Activated CD8-positive, alpha-beta T cell treated with anti-CD3 and anti-CD28 coated beads for 36 hours (primary cell): ENCODE measurements at regions of chr6 and their contacts with region 1.

Region 1: DNA sequence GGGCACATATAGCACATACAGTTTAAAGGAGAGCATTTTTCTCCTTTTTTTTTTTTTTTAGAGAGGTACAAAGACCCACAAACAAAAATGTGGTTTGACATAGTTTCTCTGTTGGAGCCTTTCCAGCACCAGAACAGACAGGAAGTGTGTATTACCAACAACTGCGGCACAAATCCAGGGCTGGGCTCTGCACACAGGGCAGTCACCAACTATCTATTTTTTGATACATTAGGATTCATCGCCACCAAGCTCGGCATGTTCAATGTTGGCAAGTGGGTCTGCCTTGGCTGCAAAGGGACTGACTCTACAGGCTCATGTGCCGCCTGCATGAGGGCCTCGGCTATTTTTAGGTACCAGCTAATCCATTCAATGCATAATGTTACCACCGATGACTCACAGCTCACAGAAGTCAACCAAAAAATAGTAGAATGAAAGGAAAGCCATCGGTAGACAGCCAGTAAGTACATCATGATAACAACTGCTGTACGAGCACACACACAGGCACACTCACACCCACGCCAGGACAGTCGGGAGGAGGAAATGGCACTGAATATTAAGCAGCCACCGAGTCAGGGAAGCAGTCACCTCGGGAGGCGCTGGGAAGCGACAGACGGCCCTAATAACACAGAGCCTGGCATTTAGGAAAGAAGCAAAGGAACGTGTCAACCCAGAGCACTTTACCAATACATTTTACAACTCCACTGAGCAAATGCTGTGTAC is 81.6 kb downstream of the GMPR start:
- DNase-seq: peak; percentile 82
- ATAC-seq: peak; percentile 56
- H3K4me3 Mint-ChIP-seq: peak overlapping the region; percentile 61
- H3K27ac Mint-ChIP-seq: peak overlapping the region; percentile 94
- H3K4me1 Mint-ChIP-seq: peaks cover 78% of the 10 kb centered on the region
- H3K27me3 Mint-ChIP-seq: no peaks in the 10 kb centered on the region
- CTCF ChIP-seq: no peak

Region 2: DNA sequence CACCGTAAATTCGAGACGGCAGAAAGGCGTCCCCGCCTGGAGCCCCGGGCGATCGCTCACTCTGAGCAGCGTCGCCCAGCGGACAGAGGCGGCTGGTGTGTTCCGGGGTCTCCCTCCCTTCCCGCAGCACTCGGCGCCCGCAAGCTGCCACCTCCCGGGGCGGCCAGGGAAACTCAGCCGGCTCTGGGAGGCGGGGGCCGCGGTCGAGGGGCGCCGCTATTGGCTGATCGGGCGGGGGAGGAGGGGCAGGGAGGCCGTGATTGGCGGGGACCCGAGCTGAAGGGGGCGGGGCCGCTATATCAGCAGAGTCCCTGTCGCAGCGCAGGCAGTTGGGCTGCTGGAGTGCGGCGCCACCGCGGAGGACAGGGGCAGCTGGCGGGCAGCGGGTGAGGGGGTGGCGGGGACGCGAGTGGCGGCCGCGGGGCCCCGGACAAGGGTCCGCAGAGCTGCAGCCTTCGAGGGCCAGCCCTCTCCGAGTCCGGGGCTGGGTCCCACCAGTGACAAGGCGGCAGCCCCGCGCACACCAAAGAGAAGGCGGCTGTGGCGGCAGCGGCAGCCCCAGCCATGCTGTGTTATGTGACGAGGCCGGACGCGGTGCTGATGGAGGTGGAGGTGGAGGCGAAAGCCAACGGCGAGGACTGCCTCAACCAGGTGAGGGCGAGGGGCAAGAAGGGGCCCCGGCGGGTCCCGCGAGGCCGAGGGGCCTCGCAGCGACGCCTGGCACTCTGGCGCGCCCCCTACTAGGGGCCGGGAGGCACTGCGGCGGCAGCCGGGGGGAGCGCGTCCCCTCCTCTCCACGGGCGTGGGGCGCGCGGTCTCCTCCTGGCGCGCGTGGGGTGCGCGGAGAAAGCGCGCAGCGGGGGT is 191.0 kb before region 1 on chr6 and contains the start of gene MYLIP:
- CTCF ChIA-PET with region 1: no interaction called
- POLR2A ChIA-PET with region 1: no interaction called
- intact Hi-C with region 1: loop called (anchors 5 kb)
- DNase-seq: peak; percentile 97
- ATAC-seq: peak; percentile 83
- H3K4me3 Mint-ChIP-seq: peak within 1 kb of the TSS; percentile 88
- H3K27ac Mint-ChIP-seq: peak within 1 kb of the TSS; percentile 91
- H3K4me1 Mint-ChIP-seq: peaks cover 22% of the 10 kb centered on the region
- H3K27me3 Mint-ChIP-seq: peaks cover 3% of the 10 kb centered on the region
- CTCF ChIP-seq: peak; percentile 60
- total RNA-seq, gene MYLIP: 7.7 to 8.1 TPM

Region 3: GRCh38 chr6:16690608-16691198 is 370.7 kb after region 1 on chr6:
- CTCF ChIA-PET with region 1: no interaction called
- POLR2A ChIA-PET with region 1: no interaction called
- intact Hi-C with region 1: loop called (anchors 10 kb)
- DNase-seq: peak; percentile 77
- ATAC-seq: peak; percentile 70
- H3K4me3 Mint-ChIP-seq: peak overlapping the region; percentile 17
- H3K27ac Mint-ChIP-seq: peak overlapping the region; percentile 92
- H3K4me1 Mint-ChIP-seq: peaks cover 86% of the 10 kb centered on the region
- H3K27me3 Mint-ChIP-seq: no peaks in the 10 kb centered on the region
- CTCF ChIP-seq: no peak

Region 4: GRCh38 chr6:16956361-16956760 is 636.4 kb after region 1 on chr6:
- CTCF ChIA-PET with region 1: no interaction called
- POLR2A ChIA-PET with region 1: no interaction called
- intact Hi-C with region 1: loop called (anchors 10 kb)
- DNase-seq: peak; percentile 51
- ATAC-seq: peak; percentile 87
- H3K4me3 Mint-ChIP-seq: no peak overlapping the region
- H3K27ac Mint-ChIP-seq: peak overlapping the region; percentile 79
- H3K4me1 Mint-ChIP-seq: peaks cover 35% of the 10 kb centered on the region
- H3K27me3 Mint-ChIP-seq: peaks cover 15% of the 10 kb centered on the region
- CTCF ChIP-seq: no peak